Activated B cell treated with CpG ODN at 0.5 μM for 24 hours (primary cell): ENCODE measurements at regions of chr20 and their contacts with region 1.

Region 1: DNA sequence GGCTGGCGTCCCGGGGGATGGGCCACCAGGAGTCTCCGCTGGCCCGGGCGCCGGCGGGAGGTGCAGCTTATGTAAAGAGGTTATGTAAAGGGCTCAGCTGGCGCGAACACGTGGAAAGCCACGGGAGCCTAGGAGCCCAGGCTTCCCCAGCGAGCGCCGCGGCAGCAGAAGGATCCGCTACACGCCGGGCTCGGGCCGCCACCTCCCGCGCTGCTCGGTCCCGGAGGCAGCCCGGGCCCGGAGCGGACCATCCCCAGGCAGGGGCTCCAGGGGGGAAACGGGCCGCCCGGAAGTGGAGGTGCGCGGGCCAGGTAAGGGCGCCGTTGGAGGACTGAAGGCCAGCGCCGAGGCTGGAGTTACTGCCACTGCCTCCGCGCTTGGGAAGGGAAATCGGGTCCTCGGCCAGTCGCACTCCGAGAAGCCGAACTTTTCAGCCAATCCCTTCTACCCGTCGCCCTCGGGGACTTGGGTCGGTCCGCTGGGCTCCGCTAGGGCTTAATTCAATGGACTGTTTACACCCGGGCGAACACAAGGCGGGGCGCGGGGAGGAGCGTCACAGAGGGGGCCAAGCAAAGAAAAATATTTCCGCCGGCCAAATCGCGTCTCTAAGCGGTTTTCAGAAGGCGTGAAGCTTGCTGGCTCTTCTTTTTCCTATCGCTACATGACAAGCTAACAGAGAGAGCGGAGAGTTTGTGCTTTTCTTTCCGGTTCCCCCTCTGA is 398 bp downstream of the STK35 start:
- DNase-seq: peak; percentile 87
- ATAC-seq: peak; percentile 82
- H3K4me3 Mint-ChIP-seq: peak overlapping the region; percentile 93
- H3K27ac Mint-ChIP-seq: peak overlapping the region; percentile 100
- H3K4me1 Mint-ChIP-seq: peaks cover 41% of the 10 kb centered on the region
- H3K27me3 Mint-ChIP-seq: no peaks in the 10 kb centered on the region
- CTCF ChIP-seq: no peak

Region 2: GRCh38 chr20:1325173-1326030 is 776.6 kb before region 1 on chr20:
- CTCF ChIA-PET with region 1: no interaction called
- POLR2A ChIA-PET with region 1: no interaction called
- intact Hi-C with region 1: loop called (anchors 1 kb)
- DNase-seq: peak; percentile 97
- ATAC-seq: peak; percentile 88
- H3K4me3 Mint-ChIP-seq: no peak overlapping the region
- H3K27ac Mint-ChIP-seq: no peak overlapping the region
- H3K4me1 Mint-ChIP-seq: peaks cover 38% of the 10 kb centered on the region
- H3K27me3 Mint-ChIP-seq: no peaks in the 10 kb centered on the region
- CTCF ChIP-seq: no peak

Region 3: GRCh38 chr20:1466211-1467081 is 635.6 kb before region 1 on chr20 and contains the start of gene NSFL1C:
- CTCF ChIA-PET with region 1: no interaction called
- POLR2A ChIA-PET with region 1: interaction called, 6 read pairs
- intact Hi-C with region 1: loop called (anchors 2 kb)
- DNase-seq: peak; percentile 100
- ATAC-seq: peak; percentile 92
- H3K4me3 Mint-ChIP-seq: peak within 1 kb of the TSS; percentile 86
- H3K27ac Mint-ChIP-seq: peak within 1 kb of the TSS; percentile 89
- H3K4me1 Mint-ChIP-seq: peaks cover 81% of the 10 kb centered on the region
- H3K27me3 Mint-ChIP-seq: no peaks in the 10 kb centered on the region
- CTCF ChIP-seq: peak; percentile 93
- total RNA-seq, gene NSFL1C: 81.7 and 89.4 TPM in 2 replicates

Region 4: DNA sequence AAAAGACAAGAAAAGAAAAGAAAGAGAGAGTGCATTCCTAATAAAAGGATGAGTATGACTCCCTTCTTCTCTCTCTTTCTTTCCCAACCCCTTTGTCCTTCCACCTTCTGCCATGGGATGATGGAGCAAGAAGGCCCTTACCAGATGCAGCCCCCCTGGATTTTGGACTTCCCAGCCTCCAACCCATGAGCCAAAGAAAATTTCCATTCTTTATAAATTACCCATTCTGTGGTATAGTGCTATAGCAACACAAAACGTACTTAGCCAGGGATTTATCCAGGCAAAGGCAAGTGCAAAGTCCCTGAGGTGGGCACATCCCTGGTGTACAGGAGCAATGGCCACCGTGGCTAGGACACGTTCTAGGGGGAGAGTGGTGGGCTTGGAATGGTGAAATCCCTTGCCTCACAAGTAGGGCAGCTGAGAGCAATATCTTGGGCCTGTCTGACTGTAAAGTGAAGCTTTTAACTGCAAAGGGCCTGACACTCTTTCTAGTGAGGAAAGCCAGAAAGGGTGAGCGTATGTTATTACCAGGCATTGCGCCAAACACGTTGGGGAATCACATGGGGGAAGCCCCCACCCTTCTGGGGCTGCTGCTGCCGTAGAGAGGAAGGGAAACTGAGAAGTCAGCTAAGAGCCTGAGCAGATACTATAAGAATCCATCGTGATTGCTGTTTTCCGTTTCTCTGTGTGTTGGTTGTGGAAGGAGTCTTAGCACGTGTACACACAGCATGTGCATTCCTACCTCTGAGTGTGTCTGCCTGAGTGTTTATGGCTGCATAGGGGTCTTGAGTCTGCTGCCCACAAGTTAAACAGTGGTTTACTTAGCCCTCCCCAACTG is 257.5 kb before region 1 on chr20:
- CTCF ChIA-PET with region 1: no interaction called
- POLR2A ChIA-PET with region 1: interaction called, 3 read pairs
- intact Hi-C with region 1: loop called (anchors 2 kb)
- DNase-seq: peak; percentile 61
- ATAC-seq: peak; percentile 98
- H3K4me3 Mint-ChIP-seq: peak overlapping the region; percentile 65
- H3K27ac Mint-ChIP-seq: peak overlapping the region; percentile 78
- H3K4me1 Mint-ChIP-seq: peaks cover 73% of the 10 kb centered on the region
- H3K27me3 Mint-ChIP-seq: no peaks in the 10 kb centered on the region
- CTCF ChIP-seq: no peak

Region 5: GRCh38 chr20:2122936-2123335 is 20.9 kb after region 1 on chr20:
- CTCF ChIA-PET with region 1: interaction called, 7 read pairs
- POLR2A ChIA-PET with region 1: interaction called, 12 read pairs
- intact Hi-C with region 1: loop called (anchors 1 kb)
- DNase-seq: no peak
- ATAC-seq: no peak
- H3K4me3 Mint-ChIP-seq: no peak overlapping the region
- H3K27ac Mint-ChIP-seq: no peak overlapping the region
- H3K4me1 Mint-ChIP-seq: peaks cover 74% of the 10 kb centered on the region
- H3K27me3 Mint-ChIP-seq: no peaks in the 10 kb centered on the region
- CTCF ChIP-seq: no peak

Region 6: GRCh38 chr20:2301164-2301622 is 199.2 kb after region 1 on chr20:
- CTCF ChIA-PET with region 1: no interaction called
- POLR2A ChIA-PET with region 1: interaction called, 3 read pairs
- intact Hi-C with region 1: loop called (anchors 1 kb)
- DNase-seq: peak; percentile 52
- ATAC-seq: peak; percentile 94
- H3K4me3 Mint-ChIP-seq: peak overlapping the region; percentile 8
- H3K27ac Mint-ChIP-seq: peak overlapping the region; percentile 87
- H3K4me1 Mint-ChIP-seq: peaks cover 33% of the 10 kb centered on the region
- H3K27me3 Mint-ChIP-seq: no peaks in the 10 kb centered on the region
- CTCF ChIP-seq: no peak

Region 7: DNA sequence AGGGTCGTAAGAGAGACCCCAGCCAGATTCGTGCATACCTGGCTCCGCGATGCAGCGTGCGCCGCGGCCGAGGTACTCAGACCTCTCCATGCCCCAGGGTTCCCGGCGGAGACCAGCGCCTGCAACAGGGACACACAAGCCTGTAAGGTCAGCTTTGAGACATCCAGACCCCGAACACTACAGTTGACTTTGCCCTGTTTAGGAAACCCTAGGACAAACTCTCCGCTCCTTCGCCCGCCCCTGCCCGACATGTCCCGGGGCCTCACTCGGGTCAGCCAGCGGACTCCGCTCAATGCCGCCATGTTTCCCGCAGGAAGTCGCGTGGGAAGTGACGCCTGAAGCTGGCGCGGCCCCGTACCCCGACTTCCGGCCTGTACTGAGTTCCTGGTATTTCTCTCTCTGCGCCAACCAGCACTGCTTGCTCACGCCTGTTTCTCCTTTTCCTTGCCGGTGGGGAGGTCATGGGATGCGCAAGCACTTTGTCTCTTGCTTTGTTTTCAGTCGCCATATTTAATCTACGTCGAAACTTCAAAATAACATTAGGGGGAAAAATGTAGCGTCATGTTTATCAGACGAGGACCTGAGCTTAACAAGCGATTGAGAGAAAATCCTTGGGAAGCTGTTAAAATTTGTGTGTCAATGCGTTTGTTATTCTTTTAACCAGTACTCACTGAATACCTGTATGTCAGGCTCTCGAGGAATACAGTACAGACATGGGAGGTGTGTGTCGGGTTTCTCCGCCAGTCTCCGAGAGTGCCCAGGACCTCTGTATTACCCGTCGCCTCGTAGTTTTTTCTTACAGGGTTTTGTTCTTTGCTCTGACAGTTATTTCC is 562.1 kb after region 1 on chr20 and contains the start of gene IDH3B:
- CTCF ChIA-PET with region 1: no interaction called
- POLR2A ChIA-PET with region 1: no interaction called
- intact Hi-C with region 1: loop called (anchors 1 kb)
- DNase-seq: peak; percentile 84
- ATAC-seq: peak; percentile 95
- H3K4me3 Mint-ChIP-seq: peak within 1 kb of the TSS; percentile 93
- H3K27ac Mint-ChIP-seq: peak within 1 kb of the TSS; percentile 98
- H3K4me1 Mint-ChIP-seq: peaks cover 19% of the 10 kb centered on the region
- H3K27me3 Mint-ChIP-seq: peaks cover 6% of the 10 kb centered on the region
- CTCF ChIP-seq: no peak
- total RNA-seq, gene IDH3B: 121 and 127 TPM in 2 replicates